WTC11 (cell line): ENCODE measurements at regions of chr16 and their contacts with region 1.

Region 1: GRCh38 chr16:13935408-13935807 is 15.5 kb downstream of the ERCC4 start:
- DNase-seq: peak; percentile 79
- ATAC-seq: peak; percentile 88
- H3K4me3 Mint-ChIP-seq: no peak overlapping the region
- H3K27ac Mint-ChIP-seq: no peak overlapping the region
- H3K4me1 Mint-ChIP-seq: no peaks in the 10 kb centered on the region
- H3K27me3 Mint-ChIP-seq: no peaks in the 10 kb centered on the region
- CTCF ChIP-seq: peak; percentile 94

Region 2: DNA sequence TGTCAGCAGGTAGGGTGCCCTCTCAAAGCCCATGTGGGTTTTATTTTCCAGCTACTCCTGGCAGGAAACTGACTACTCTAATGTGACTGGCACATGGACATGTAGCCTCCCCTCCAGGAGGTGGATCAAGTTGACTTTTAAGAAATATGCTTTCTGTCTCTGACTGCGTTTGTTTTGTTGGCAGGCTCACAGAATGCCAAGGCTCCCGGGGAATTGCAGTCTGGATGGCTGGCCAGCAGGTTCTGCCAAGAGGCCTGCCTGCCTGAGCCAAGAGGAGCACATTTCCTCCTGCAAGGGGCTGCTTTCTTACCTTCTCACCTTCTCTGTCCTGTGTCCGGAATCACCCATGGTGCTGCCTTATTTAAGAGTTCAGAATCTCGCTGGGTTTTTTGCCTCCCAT is 232.8 kb before region 1 on chr16:
- CTCF ChIA-PET with region 1: no interaction called
- POLR2A ChIA-PET with region 1: no interaction called
- DNase-seq: no peak
- ATAC-seq: no peak
- H3K4me3 Mint-ChIP-seq: no peak overlapping the region
- H3K27ac Mint-ChIP-seq: no peak overlapping the region
- H3K4me1 Mint-ChIP-seq: peaks cover 7% of the 10 kb centered on the region
- H3K27me3 Mint-ChIP-seq: no peaks in the 10 kb centered on the region; the same call in 1 of the 2 replicates
- CTCF ChIP-seq: no peak

Region 3: DNA sequence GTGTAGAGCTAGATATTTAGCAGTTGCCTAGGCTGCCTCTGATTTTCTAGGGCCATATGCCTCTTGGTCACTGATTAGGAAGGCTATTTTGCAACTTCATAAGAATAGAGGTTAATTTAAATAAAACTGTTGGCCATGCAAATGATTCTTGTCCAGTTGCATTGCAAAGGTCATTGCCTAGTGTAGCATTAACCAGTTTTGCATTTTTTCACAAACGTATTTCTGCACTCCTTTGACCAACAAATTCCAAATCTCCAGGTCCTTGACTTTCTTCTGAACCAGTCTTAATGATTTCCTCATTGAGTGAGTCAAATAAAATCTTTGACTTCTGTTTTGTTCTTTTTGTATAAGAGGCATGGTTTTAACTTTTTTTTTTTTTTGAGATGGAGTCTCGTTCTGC is 18.1 kb after region 1 on chr16:
- CTCF ChIA-PET with region 1: interaction called, 11 read pairs
- POLR2A ChIA-PET with region 1: no interaction called
- DNase-seq: no peak
- ATAC-seq: no peak
- H3K4me3 Mint-ChIP-seq: no peak overlapping the region
- H3K27ac Mint-ChIP-seq: no peak overlapping the region
- H3K4me1 Mint-ChIP-seq: peaks cover 24% of the 10 kb centered on the region
- H3K27me3 Mint-ChIP-seq: no peaks in the 10 kb centered on the region
- CTCF ChIP-seq: no peak

Region 4: GRCh38 chr16:14050297-14051036 is 115.1 kb after region 1 on chr16:
- CTCF ChIA-PET with region 1: no interaction called
- POLR2A ChIA-PET with region 1: no interaction called
- DNase-seq: peak; percentile 68
- ATAC-seq: peak; percentile 97
- H3K4me3 Mint-ChIP-seq: no peak overlapping the region
- H3K27ac Mint-ChIP-seq: no peak overlapping the region; the same call in 1 of the 2 replicates
- H3K4me1 Mint-ChIP-seq: no peaks in the 10 kb centered on the region
- H3K27me3 Mint-ChIP-seq: no peaks in the 10 kb centered on the region
- CTCF ChIP-seq: no peak